Posterior vena cava (tissue), 2 donors: ENCODE measurements at regions of chr1 and their contacts with region 1.

Region 1: GRCh38 chr1:21058035-21058793 is 118.5 kb downstream of the EIF4G3 start:
- DNase-seq: no peak

Region 2: GRCh38 chr1:20786253-20787028 is 271.8 kb before region 1 on chr1:
- intact Hi-C with region 1: loop called in 1 of 2 experiments (anchors 2 kb)
- DNase-seq: peak; percentile 98